Activated naive CD4-positive, alpha-beta T cell treated with anti-CD3 and anti-CD28 coated beads for 36 hours (primary cell): ENCODE measurements at regions of chr7 and their contacts with region 1.

Region 1: DNA sequence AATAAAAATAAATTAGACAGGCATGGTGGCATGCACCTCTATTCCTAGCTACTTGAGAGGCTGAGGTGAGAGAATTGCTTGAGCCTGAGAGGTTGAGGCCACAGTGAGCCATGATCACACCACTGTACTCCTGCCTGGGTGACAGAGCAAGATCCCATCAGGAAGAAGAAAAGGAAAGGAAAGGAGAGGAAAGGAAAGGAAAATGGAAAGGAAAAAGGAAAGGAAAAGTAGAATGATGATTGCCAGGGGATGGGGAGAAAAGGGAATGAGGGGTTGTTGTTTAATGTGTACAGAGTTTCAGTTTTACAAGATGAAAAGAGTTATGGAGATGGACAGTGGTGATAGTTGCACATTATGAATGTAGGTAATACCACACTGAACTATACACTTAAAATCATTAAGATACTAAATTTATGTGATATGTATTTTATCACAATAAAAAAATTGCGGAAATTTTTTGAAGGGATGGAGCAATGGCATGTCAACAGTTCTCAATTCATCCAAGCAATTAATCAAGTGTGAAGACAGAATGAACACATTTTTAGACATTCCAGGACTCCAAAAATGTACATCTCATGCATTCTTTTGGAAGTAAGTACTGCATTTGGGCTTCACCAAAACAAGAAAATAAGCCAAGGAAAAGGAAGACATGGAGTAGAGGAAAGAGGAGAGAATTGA is 44.3 kb downstream of the IL6 start:
- DNase-seq: no peak
- H3K4me3 Mint-ChIP-seq: no peak overlapping the region
- H3K27ac Mint-ChIP-seq: no peak overlapping the region
- H3K4me1 Mint-ChIP-seq: no peaks in the 10 kb centered on the region
- H3K27me3 Mint-ChIP-seq: peaks cover 10% of the 10 kb centered on the region

Region 2: GRCh38 chr7:22782616-22783232 is 11.4 kb after region 1 on chr7:
- CTCF ChIA-PET with region 1: interaction called, 15 read pairs
- intact Hi-C with region 1: no loop called
- DNase-seq: peak; percentile 88
- H3K4me3 Mint-ChIP-seq: no peak overlapping the region
- H3K27ac Mint-ChIP-seq: no peak overlapping the region
- H3K4me1 Mint-ChIP-seq: no peaks in the 10 kb centered on the region
- H3K27me3 Mint-ChIP-seq: no peaks in the 10 kb centered on the region